ENCODE measurements at regions of chr15 and their contacts with region 1.

Region 1: DNA sequence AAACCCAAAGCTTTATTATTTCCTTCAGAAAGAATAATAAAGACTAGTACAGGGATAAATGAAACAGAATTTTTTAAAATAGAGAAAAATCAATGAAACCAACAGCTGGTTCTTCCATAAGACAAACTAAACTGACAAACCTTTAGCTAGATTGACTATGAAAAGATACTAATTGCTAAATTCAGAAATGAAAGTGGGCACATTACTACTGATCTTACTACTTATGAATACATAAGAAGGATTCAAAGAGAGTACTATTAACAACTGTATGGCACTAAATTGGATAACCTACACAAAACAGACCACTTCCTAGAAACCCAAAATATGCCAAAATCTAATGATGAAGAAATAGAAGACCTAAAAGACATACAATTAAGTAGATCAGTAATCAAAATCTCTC is 278.2 kb downstream of the ISL2 start:
- DNase-seq: no peak
- ATAC-seq: no peak
- H3K4me3 ChIP-seq: no peak overlapping the region
- H3K27ac ChIP-seq: no peak overlapping the region
- H3K4me1 ChIP-seq: no peaks in the 10 kb centered on the region
- H3K27me3 ChIP-seq: no peaks in the 10 kb centered on the region
- CTCF ChIP-seq: no peak

Region 2: GRCh38 chr15:76576523-76577279 is 38.0 kb before region 1 on chr15:
- intact Hi-C with region 1: no loop called
- DNase-seq: peak; percentile 70 to 72
- ATAC-seq: peak; percentile 91 to 99 (median 96)
- H3K4me3 ChIP-seq: peak overlapping the region in 1 of 10 donors; percentile 14
- H3K27ac ChIP-seq: peak overlapping the region in 9 of 10 donors; percentile 1 to 82 (median 69)
- H3K4me1 ChIP-seq: peaks cover 0 to 26% (median 15%) of the 10 kb centered on the region in 9 donors
- H3K27me3 ChIP-seq: no peaks in the 10 kb centered on the region
- CTCF ChIP-seq: no peak

Region 3: DNA sequence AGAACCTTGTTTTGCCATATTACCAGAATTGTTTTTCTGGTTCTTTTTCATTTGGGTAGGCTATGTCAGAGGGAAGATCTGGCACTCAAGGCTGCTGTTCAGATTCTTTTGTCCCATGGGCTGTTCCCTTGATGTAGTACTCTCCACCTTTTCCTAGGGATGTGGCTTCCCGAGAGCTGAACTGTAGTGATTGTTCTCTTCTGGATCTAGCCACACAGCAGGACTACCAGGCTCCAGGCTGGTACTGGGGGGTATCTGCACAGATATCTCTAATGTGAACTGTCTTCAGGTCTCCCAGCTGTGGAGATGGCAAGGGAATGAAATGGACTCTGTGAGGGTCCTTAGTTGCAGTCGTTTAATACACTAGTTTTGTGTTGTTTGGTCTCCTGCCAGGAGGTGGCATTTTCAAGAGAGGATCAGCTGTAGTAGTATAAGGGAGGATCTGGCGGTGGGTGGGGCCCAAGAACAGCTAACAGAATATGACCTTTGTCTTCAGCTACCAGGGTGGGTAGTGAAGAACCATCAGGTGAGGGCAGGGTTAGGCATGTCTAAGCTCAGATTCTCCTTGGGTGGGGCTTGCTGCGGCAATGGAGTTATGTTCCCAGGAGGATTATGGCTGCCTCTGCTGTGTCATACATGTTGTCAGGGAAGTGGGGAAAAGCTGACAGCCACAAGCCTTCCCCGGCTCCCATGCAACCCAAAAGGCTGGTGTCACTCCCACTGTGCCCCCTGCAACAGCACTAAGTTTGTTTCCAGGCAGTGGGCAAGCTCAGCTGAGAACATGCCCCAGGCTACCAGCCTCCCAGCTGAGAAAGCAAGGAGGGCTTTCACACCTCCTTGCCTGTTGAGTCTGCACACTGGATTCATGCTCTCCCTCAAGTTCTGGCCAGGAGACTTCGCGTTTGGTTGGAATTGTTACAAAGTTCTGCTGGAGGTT is 25.6 kb before region 1 on chr15:
- intact Hi-C with region 1: loop called in 1 of 10 experiments (anchors 1 kb)
- DNase-seq: no peak
- ATAC-seq: no peak
- H3K4me3 ChIP-seq: no peak overlapping the region
- H3K27ac ChIP-seq: no peak overlapping the region
- H3K4me1 ChIP-seq: peaks cover 0 to 6% (median 0%) of the 10 kb centered on the region in 9 donors
- H3K27me3 ChIP-seq: no peaks in the 10 kb centered on the region
- CTCF ChIP-seq: no peak

Region 4: GRCh38 chr15:76625267-76625666 is 10.5 kb after region 1 on chr15:
- intact Hi-C with region 1: loop called in 1 of 10 experiments (anchors 2 kb)
- DNase-seq: no peak
- ATAC-seq: no peak
- H3K4me3 ChIP-seq: no peak overlapping the region
- H3K27ac ChIP-seq: no peak overlapping the region
- H3K4me1 ChIP-seq: no peaks in the 10 kb centered on the region
- H3K27me3 ChIP-seq: no peaks in the 10 kb centered on the region
- CTCF ChIP-seq: no peak

Measured in heart right ventricle (tissue), 16 donors.